Head of caudate nucleus (tissue), 42 donors: ENCODE measurements at regions of chr14 and their contacts with region 1.

Region 1: GRCh38 chr14:68734231-68734775 is 58.6 kb downstream of the ZFP36L1 start:
- DNase-seq: peak in 1 of 42 donors; percentile 33

Region 2: DNA sequence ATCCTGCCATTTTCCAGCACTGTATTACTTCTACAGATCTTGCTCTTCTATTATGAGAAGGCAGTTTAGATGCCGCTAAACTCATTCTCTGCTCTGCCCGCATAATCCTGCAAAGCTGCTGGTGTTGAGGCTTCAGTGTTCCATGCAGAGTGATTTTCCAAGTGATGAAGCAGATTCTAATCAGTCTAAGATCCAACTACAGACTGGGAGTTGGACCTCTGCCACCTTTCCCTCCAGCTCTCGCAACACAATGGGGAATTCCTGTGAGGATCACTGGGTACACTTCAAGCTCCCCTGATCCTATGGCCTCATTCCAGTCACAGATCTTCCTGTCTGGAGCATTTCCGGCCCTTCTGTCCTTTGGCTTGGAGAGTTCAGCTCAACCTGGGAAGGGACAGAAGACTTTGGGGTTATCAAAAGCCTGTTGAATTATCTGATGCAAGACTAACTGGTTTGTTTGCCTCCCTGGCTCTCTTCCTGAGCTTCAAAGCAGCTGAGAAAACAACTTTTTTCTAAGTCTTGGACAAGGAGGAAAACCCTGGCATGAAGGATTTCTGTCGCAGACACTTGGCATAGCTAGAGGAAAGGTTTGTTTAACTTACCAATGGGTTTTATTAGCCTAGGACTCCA is 275.3 kb before region 1 on chr14:
- intact Hi-C with region 1: no loop called
- DNase-seq: peak in 2 of 42 donors; percentile 27 to 59

Region 3: DNA sequence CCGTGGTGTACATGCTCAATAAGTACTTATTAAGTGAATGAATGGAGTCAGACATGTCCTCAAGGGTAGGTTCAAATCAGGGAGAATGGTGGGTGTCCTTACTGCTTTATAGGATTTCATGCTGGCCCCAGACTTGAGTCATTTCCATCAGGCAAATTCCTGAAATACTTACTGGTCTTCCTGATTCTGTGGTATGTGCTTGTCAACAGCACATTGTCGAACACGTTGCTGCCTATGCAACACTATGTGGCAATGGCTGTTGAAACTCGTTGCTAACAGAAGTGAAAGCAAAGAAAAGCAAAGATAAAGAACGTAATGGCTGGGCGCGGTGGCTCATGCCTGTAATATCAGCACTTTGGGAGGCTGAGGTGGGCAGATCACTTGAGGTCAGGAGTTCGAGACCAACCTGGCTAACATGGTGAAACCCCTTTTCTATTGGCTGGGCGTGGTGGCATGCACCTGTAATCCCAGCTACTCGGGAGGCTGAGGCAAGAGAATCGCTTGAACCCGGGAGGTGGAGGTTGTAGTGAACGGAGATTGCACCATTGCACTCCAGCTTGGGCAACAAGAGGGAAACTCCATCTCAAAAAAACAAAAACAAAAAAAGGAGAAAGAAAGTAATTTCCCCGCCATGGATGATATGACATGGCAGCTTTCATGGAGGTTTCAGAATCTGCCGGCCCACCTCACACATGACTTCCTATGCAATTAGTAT is 156.3 kb before region 1 on chr14:
- intact Hi-C with region 1: no loop called
- DNase-seq: peak in 2 of 42 donors; percentile 22 to 55

Region 4: GRCh38 chr14:68607081-68607886 is 127.0 kb before region 1 on chr14:
- intact Hi-C with region 1: loop called (anchors 5 kb)
- DNase-seq: peak in 3 of 42 donors; percentile 20 to 47 (median 34)

Region 5: GRCh38 chr14:68676511-68676943 is 57.8 kb before region 1 on chr14:
- intact Hi-C with region 1: no loop called
- DNase-seq: no peak